ENCODE measurements at regions of chr11 and their contacts with region 1.

Region 1: GRCh38 chr11:65095974-65096806 is at the start of gene VPS51:
- DNase-seq: no peak
- ATAC-seq: peak; percentile 97
- H3K4me3 ChIP-seq: peak within 1 kb of the TSS; percentile 63 to 88
- H3K27ac ChIP-seq: peak within 1 kb of the TSS; percentile 80
- H3K4me1 ChIP-seq: peaks cover 5% of the 10 kb centered on the region
- H3K27me3 ChIP-seq: no peaks in the 10 kb centered on the region
- CTCF ChIP-seq: no peak
- total RNA-seq, gene VPS51: 101 TPM

Region 2: DNA sequence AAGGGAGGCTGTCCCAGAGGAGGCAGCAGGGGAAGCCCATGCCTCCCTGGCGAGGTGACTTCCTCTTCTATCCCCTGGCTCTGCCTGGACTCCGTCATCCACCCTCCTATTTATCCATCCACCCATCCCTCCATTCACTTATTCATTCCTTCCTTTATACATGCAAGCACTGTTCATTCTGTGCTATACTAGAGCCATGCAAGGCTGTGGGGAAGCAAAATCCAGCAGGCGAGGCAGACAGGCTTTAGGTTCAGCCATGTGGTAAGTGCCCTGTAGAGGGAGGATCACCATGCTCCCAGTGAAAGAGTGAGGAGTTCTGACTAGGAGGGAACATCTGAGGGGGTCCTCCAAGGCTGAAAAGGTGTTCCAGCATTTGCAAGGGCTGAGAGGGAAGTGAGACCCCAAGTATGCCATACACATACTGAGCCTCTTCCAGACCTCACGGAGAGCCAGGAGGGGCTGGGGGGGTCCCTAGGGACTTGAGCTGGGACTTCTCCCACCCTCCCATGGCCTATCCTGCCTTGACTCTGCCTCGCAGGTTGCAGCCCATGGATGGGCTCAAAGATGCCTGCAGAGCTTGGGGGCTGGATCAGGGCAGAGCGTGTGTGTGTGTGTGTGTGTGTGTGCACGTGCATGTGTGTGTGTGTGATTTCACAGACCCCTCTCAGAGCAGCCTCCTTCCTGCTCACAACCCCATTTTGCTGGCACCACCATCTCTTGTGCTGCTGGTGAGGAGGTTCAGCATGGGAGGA is 36.5 kb before region 1 on chr11:
- CTCF ChIA-PET with region 1: no interaction called
- POLR2A ChIA-PET with region 1: interaction called, 12 read pairs
- in situ Hi-C with region 1: no loop called
- intact Hi-C with region 1: no loop called
- DNase-seq: no peak
- ATAC-seq: peak; percentile 57
- H3K4me3 ChIP-seq: no peak overlapping the region
- H3K27ac ChIP-seq: no peak overlapping the region
- H3K4me1 ChIP-seq: no peaks in the 10 kb centered on the region
- H3K27me3 ChIP-seq: no peaks in the 10 kb centered on the region
- CTCF ChIP-seq: no peak

Measured in Panc1 (cell line).